Right ventricle myocardium inferior (tissue), 1 donor: ENCODE measurements at regions of chr10 and their contacts with region 1.

Region 1: DNA sequence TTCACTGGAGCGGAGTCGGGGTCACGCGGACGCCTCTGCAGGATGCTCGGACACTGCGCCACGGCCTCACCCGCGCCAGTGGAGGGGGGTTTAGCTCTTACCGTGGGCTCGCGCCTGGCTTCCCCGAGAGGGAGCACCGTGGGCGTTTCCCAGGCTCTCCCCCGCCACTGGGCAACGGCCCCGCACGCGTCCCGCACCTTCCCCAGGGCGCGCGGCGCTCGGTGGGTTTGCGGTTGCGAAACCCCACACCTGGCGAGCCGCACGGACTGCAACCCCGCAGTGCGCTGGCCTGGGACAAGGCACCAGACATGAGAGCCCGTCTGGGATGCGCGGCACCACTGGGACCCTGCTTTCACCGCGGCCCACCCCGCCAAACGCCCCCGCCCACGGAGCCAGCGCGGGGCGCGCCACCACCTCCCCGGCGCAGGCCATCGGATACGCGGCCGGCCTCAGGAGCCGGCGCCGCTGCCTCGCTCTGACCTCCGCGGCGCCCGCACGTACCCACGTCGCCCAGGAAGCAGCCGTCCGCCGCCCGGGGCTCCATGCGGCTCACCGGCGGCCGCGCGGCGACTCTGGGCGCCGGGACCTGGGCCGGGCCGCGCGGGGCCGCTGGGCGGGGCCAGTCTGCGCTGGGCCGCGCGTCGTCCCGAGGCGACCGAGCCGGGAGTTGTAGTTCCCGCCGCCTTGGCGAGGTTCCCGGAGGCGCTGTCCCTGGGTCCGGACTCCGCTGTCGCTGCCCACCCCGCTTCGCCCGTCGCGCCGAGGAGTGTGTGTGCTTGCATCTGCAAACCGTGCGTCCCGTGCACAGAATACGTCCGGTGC is at the start of gene ASB13:
- DNase-seq: peak; percentile 91
- ATAC-seq: peak; percentile 97
- total RNA-seq, gene ASB13: 15.4 TPM

Region 2: GRCh38 chr10:5629303-5630111 is 36.7 kb before region 1 on chr10:
- intact Hi-C with region 1: loop called (anchors 5 kb)
- DNase-seq: peak; percentile 87
- ATAC-seq: peak; percentile 82